Naive thymus-derived CD4-positive, alpha-beta T cell (primary cell): ENCODE measurements at regions of chr1 and their contacts with region 1.

Region 1: DNA sequence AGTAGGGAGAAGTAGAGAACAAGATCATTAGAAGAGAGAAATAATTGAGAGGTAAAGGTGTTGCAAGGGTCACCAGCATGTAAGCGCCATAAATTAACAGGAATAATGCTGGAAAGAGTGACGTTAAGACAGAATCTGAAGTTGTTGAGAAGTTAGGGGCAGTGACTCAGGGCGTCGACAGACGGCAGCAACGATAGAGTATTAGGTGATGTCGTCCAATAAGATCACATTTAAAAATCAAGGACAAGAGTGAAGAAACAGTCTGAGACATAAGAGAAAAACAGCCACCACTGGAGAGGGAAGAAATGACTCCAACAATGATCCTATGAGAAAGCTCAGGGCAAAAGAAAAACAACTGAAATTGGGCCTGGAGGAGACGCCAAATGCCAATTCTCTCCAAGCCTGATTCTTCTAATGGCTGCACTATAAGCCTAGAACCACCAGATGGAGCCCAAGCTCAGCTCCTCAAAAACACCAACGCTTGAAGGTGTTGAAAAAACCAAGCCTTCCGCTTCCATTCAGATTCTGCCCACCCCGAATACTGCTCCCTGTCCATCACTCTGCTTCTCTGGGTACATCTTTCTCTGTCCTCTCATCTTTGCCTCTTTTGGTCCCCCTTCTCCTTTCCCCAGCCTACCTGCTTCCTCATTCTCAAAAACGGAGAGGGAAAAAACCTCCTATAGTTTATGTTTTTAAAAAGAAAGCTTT is 70.0 kb downstream of the LUZP1 start:
- DNase-seq: peak; percentile 28 to 71 (median 60)
- ATAC-seq: peak; percentile 79
- H3K4me3 ChIP-seq: no peak overlapping the region
- H3K4me3 Mint-ChIP-seq: peak overlapping the region in 5 of 10 donors; percentile 8 to 63 (median 29)
- H3K27ac ChIP-seq: no peak overlapping the region
- H3K27ac Mint-ChIP-seq: peak overlapping the region in 2 of 9 donors; percentile 14 to 36
- H3K4me1 ChIP-seq: peaks cover 20 to 30% of the 10 kb centered on the region in 2 donors
- H3K4me1 Mint-ChIP-seq: peaks cover 30 to 49% (median 34%) of the 10 kb centered on the region in 7 donors
- H3K27me3 ChIP-seq: no peaks in the 10 kb centered on the region
- H3K27me3 Mint-ChIP-seq: no peaks in the 10 kb centered on the region

Region 2: GRCh38 chr1:22808676-22809483 is 289.7 kb before region 1 on chr1:
- CTCF ChIA-PET with region 1: no interaction called
- POLR2A ChIA-PET with region 1: no interaction called
- intact Hi-C with region 1: no loop called
- DNase-seq: no peak
- ATAC-seq: no peak
- H3K4me3 ChIP-seq: no peak overlapping the region
- H3K4me3 Mint-ChIP-seq: no peak overlapping the region
- H3K27ac ChIP-seq: no peak overlapping the region
- H3K27ac Mint-ChIP-seq: no peak overlapping the region
- H3K4me1 ChIP-seq: no peaks in the 10 kb centered on the region
- H3K4me1 Mint-ChIP-seq: no peaks in the 10 kb centered on the region
- H3K27me3 ChIP-seq: no peaks in the 10 kb centered on the region
- H3K27me3 Mint-ChIP-seq: peaks cover 0 to 13% (median 0%) of the 10 kb centered on the region in 5 donors

Region 3: GRCh38 chr1:23111600-23112535 is 13.3 kb after region 1 on chr1:
- CTCF ChIA-PET with region 1: interaction called, 20 read pairs
- POLR2A ChIA-PET with region 1: interaction called, 3 read pairs
- intact Hi-C with region 1: no loop called
- DNase-seq: no peak
- ATAC-seq: no peak
- H3K4me3 ChIP-seq: no peak overlapping the region
- H3K4me3 Mint-ChIP-seq: peak overlapping the region in 3 of 10 donors; percentile 1 to 26 (median 12)
- H3K27ac ChIP-seq: no peak overlapping the region
- H3K27ac Mint-ChIP-seq: peak overlapping the region in 8 of 9 donors; percentile 2 to 75 (median 38)
- H3K4me1 ChIP-seq: peaks cover 13 to 23% of the 10 kb centered on the region in 2 donors
- H3K4me1 Mint-ChIP-seq: peaks cover 24 to 71% (median 49%) of the 10 kb centered on the region in 7 donors
- H3K27me3 ChIP-seq: no peaks in the 10 kb centered on the region
- H3K27me3 Mint-ChIP-seq: no peaks in the 10 kb centered on the region

Region 4: DNA sequence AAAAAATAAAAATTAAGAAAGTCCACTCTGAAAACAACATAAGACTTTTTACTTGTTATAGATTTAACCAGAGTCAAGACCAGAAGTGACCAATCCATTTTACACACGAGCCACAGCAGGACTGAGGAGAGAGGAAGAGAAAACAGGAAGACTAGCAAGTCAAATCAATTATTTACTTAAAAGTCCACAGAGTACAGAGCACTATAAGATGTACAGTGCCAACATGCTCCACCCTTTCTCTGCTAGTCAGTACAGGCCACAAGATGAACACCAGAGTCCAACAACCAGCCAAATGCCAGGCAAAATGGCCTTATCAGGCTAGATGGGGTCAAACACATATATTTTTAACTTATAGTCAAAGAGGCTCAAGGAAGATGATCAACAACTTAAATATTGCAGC is 50.5 kb after region 1 on chr1:
- CTCF ChIA-PET with region 1: interaction called, 5 read pairs
- POLR2A ChIA-PET with region 1: no interaction called
- intact Hi-C with region 1: loop called in 1 of 2 experiments (anchors 5 kb)
- DNase-seq: no peak
- ATAC-seq: no peak
- H3K4me3 ChIP-seq: no peak overlapping the region
- H3K4me3 Mint-ChIP-seq: peak overlapping the region in 3 of 10 donors; percentile 1 to 8 (median 5)
- H3K27ac ChIP-seq: no peak overlapping the region
- H3K27ac Mint-ChIP-seq: peak overlapping the region in 4 of 9 donors; percentile 16 to 88 (median 49)
- H3K4me1 ChIP-seq: peaks cover 12 to 15% of the 10 kb centered on the region in 2 donors
- H3K4me1 Mint-ChIP-seq: peaks cover 20 to 55% (median 34%) of the 10 kb centered on the region in 7 donors
- H3K27me3 ChIP-seq: no peaks in the 10 kb centered on the region
- H3K27me3 Mint-ChIP-seq: no peaks in the 10 kb centered on the region

Region 5: DNA sequence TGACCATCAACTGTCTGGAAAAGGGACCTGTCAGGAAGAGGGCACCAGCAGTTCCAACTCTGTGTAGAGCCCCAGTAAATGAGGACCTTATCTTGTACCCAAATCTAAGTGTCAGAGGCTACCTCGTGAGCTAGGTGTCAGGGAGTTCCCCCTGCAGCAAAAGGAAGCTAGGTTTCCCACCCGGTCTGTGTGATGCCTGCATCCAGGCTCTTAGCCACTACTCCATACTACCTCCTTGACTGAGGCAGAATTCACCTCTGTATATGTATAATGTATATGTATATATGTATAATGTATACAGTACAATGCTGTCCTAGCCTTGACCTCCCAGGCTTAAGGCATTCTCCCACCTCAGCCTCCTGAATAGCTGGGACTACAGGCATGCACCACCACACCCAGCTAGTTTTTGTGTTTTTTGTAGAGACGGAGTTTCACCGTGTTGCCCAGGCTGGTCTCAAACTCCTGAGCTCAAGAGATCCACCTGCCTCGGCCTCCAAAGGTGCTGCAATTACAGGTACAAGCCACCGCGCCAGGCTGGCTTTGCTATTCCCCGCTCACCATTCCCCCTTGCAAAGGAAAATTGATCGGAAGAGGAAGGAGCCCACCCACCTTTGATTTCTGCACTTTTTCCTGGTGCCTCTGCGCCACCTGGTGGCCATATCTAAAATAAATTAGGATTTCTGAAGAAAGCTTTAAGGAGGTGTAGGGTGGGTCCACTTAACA is 85.8 kb after region 1 on chr1:
- CTCF ChIA-PET with region 1: interaction called, 295 read pairs
- POLR2A ChIA-PET with region 1: interaction called, 4 read pairs
- intact Hi-C with region 1: loop called (anchors 1 kb)
- DNase-seq: peak; percentile 28 to 66 (median 45)
- ATAC-seq: peak; percentile 47
- H3K4me3 ChIP-seq: no peak overlapping the region
- H3K4me3 Mint-ChIP-seq: peak overlapping the region in 9 of 10 donors; percentile 55 to 81 (median 77)
- H3K27ac ChIP-seq: no peak overlapping the region
- H3K27ac Mint-ChIP-seq: peak overlapping the region in 2 of 9 donors; percentile 31 to 60
- H3K4me1 ChIP-seq: peaks cover 0 to 7% of the 10 kb centered on the region in 2 donors
- H3K4me1 Mint-ChIP-seq: peaks cover 0 to 8% (median 4%) of the 10 kb centered on the region in 7 donors
- H3K27me3 ChIP-seq: no peaks in the 10 kb centered on the region
- H3K27me3 Mint-ChIP-seq: peaks cover 0 to 11% (median 0%) of the 10 kb centered on the region in 5 donors